ENCODE measurements at regions of chr17 and their contacts with region 1.

Region 1: DNA sequence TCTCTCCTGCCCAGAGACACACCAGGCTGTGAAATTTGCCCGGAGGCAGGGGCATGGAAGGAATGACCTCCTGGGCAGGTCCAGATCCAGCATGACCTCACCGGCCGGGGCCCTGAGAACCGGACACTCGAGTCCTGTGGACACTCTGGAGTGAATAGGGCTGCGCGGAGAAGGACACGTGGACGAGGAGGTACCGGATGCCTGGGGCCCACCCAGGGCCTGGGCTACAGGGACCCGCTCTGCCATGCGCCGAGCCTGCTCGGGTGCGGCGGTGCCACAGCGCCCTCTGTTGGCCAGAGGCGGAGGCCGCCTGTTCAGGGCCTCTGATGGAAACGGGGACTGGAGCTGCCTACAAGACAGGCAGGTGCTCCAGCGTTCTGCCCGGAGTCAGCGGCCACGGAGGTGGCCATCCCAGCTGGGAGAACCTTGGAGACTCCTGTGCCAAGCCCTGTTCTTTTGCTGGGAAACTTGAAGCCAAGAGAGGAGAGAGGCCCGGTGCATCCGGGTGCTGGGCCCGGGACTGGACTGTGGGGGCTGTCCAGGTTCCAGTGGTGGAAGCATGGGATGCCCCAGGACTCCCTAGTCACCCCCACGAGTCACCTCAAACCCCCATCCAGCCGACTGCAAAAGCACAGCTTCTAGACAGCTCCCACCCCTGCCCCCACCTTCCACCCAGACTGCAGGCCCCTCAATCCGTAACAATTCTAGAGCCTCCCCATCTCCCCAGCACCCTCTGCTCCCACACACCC is 19.3 kb upstream of the NXPH3 start:
- DNase-seq: peak; percentile 87
- ATAC-seq: peak; percentile 91

Region 2: DNA sequence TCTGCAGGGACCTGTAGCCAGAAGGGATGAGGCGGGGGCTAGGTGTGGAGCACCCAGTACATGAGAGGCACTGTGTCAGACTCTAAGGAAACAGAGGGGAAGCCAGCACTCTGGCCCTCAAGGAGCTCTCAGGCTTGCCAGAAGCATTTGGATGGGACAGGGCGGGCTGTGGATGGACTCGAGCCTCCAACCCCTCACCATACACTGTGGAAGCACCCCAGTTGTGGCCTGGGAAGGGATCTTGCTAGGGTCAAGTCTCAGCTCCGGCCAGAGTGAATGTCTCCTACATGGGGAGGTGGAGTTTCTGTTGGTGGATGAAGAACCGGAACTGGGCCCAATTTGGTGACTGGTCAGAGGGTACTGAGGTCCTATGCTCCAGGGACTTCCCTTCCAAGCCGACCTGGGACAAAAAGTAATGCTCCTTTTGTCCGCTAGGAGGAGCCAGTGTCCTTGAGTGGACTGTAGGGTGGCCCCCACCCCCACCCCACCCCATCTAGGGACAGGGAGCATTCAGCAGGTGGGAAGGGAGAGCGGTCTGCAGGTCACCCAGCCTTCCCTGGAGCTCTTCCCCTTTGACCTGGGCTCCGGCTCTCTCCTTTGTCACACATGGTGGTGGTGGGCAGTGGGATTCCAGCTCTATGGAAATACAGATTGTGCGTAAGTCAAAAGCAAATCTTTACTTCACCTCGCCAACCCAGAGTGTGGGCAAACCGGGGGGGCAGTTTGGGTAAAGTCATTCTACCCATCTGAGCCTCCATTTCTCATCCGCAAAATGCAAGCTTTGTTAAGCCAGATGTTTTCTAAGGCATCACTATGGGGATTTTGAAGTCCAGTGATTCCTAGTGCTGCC is 121.4 kb before region 1 on chr17:
- intact Hi-C with region 1: loop called (anchors 10 kb)
- DNase-seq: no peak
- ATAC-seq: peak; percentile 80

Measured in left ventricle myocardium superior (tissue), 1 donor.